ENCODE measurements at regions of chr3 and their contacts with region 1.

Region 1: GRCh38 chr3:185558395-185558794 is 6.0 kb upstream of the LIPH start:
- DNase-seq: no peak
- ATAC-seq: no peak
- H3K4me3 ChIP-seq: no peak overlapping the region
- H3K4me3 Mint-ChIP-seq: no peak overlapping the region
- H3K27ac ChIP-seq: no peak overlapping the region
- H3K27ac Mint-ChIP-seq: no peak overlapping the region
- H3K4me1 ChIP-seq: peaks cover 0 to 9% of the 10 kb centered on the region in 2 donors
- H3K4me1 Mint-ChIP-seq: peaks cover 10% of the 10 kb centered on the region
- H3K27me3 ChIP-seq: peaks cover 0 to 2% (median 0%) of the 10 kb centered on the region in 4 experiments
- H3K27me3 Mint-ChIP-seq: peaks cover 15% of the 10 kb centered on the region
- CTCF ChIP-seq: no peak

Region 2: DNA sequence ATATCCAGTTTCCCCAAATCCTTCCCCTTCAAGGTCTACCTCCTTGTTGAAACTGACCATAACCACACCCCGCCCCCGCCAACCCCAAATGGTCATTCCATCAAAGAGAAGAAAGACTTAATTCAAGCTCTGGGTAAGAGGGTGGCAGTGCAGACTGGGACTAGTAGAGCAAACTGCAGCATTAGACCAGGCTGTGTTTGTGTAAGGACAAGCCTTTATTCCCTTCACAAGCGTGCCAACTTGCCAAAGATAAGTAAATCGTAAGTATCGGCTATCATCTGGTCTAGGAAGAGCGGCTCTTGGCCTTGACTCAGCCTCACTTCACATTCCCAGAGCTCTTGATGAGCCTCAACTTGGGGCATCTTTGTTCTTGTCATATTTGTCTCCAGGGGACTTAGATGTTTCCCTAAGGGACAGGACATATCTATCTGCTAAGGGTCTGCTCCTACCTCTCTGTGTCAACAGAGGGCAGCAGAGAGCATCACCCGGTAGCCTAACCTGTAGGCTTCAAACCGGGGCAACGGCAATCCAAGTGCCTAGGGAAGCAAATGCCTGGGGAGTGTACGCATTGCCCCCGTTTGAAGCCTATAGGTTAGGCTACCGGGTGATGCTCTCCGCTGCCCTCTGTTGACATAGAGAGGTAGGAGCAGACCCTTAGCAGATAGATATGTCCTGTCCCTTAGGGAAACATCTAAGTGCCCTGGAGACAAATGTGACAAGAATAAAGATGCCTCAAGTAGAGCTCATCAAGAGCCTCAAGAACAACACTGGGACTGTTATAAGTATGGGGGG is 204.4 kb before region 1 on chr3:
- CTCF ChIA-PET with region 1: interaction called, 15 read pairs
- POLR2A ChIA-PET with region 1: no interaction called
- intact Hi-C with region 1: no loop called
- DNase-seq: peak; percentile 74
- ATAC-seq: peak; percentile 81
- H3K4me3 ChIP-seq: no peak overlapping the region
- H3K4me3 Mint-ChIP-seq: no peak overlapping the region
- H3K27ac ChIP-seq: no peak overlapping the region
- H3K27ac Mint-ChIP-seq: no peak overlapping the region
- H3K4me1 ChIP-seq: no peaks in the 10 kb centered on the region
- H3K4me1 Mint-ChIP-seq: no peaks in the 10 kb centered on the region
- H3K27me3 ChIP-seq: peaks cover 0 to 5% (median 2%) of the 10 kb centered on the region in 4 experiments
- H3K27me3 Mint-ChIP-seq: peaks cover 23% of the 10 kb centered on the region
- CTCF ChIP-seq: peak; percentile 69

Region 3: GRCh38 chr3:185572183-185572582 is 13.8 kb after region 1 on chr3:
- CTCF ChIA-PET with region 1: interaction called, 17 read pairs
- POLR2A ChIA-PET with region 1: no interaction called
- intact Hi-C with region 1: no loop called
- DNase-seq: no peak
- ATAC-seq: no peak
- H3K4me3 ChIP-seq: no peak overlapping the region
- H3K4me3 Mint-ChIP-seq: no peak overlapping the region
- H3K27ac ChIP-seq: no peak overlapping the region
- H3K27ac Mint-ChIP-seq: no peak overlapping the region
- H3K4me1 ChIP-seq: peaks cover 0 to 6% of the 10 kb centered on the region in 2 donors
- H3K4me1 Mint-ChIP-seq: peaks cover 5% of the 10 kb centered on the region
- H3K27me3 ChIP-seq: no peaks in the 10 kb centered on the region
- H3K27me3 Mint-ChIP-seq: peaks cover 8% of the 10 kb centered on the region
- CTCF ChIP-seq: no peak

Region 4: GRCh38 chr3:186079925-186080324 is 521.5 kb after region 1 on chr3:
- CTCF ChIA-PET with region 1: no interaction called
- POLR2A ChIA-PET with region 1: no interaction called
- intact Hi-C with region 1: no loop called
- DNase-seq: no peak
- ATAC-seq: no peak
- H3K4me3 ChIP-seq: no peak overlapping the region
- H3K4me3 Mint-ChIP-seq: no peak overlapping the region
- H3K27ac ChIP-seq: no peak overlapping the region
- H3K27ac Mint-ChIP-seq: no peak overlapping the region
- H3K4me1 ChIP-seq: no peaks in the 10 kb centered on the region
- H3K4me1 Mint-ChIP-seq: no peaks in the 10 kb centered on the region
- H3K27me3 ChIP-seq: no peaks in the 10 kb centered on the region
- H3K27me3 Mint-ChIP-seq: no peaks in the 10 kb centered on the region
- CTCF ChIP-seq: no peak

Measured in B cell (primary cell).